ENCODE measurements at regions of chr2 and their contacts with region 1.

Region 1: GRCh38 chr2:28894470-28895177 is at the start of gene WDR43:
- DNase-seq: peak; percentile 99
- ATAC-seq: peak; percentile 94
- H3K4me3 Mint-ChIP-seq: peak within 1 kb of the TSS; percentile 97
- H3K27ac Mint-ChIP-seq: peak within 1 kb of the TSS; percentile 95
- H3K4me1 Mint-ChIP-seq: peaks cover 32% of the 10 kb centered on the region
- H3K27me3 Mint-ChIP-seq: no peaks in the 10 kb centered on the region
- total RNA-seq, gene WDR43: 109 to 170 TPM

Region 2: DNA sequence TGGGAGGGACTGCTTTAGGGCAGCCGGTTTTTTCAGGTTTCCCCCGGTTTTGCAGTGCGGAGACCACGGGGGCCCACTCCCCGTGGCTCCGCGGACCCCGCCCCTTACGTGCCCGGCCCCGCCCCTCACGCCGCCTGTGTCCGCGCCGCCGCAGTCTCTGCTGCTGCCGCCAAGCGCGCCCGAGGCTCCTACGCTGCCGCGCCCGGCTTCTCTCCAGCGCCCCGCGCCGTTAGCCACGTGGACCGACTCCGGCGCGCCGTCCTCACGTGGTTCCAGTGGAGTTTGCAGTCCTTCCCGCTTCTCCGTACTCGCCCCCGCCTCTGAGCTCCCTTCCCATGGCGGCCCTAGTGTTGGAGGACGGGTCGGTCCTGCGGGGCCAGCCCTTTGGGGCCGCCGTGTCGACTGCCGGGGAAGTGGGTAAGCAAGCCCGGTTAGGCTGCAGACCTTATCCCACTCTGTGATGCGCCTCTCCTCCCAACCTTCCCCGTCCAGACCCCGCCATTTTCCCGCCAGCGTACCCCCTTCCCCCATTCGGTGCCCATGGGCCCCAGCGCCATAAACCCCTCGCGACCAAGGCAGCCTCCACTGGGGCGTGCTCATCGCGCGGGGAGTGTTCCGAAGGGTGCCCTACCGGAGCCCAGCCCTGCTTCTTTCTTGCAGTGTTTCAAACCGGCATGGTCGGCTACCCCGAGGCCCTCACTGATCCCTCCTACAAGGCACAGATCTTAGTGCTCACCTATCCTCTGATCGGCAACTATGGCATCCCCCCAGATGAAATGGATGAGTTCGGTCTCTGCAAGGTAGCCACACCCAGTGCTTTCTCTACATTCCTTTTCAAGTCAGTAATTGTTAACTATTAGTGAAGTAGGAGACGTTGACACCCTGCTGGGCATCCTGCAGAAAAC is 1677.2 kb before region 1 on chr2 and contains the start of gene CAD:
- CTCF ChIA-PET with region 1: no interaction called
- POLR2A ChIA-PET with region 1: no interaction called
- intact Hi-C with region 1: loop called in 1 of 2 experiments (anchors 10 kb)
- DNase-seq: peak; percentile 94
- ATAC-seq: peak; percentile 90
- H3K4me3 Mint-ChIP-seq: peak within 1 kb of the TSS; percentile 93
- H3K27ac Mint-ChIP-seq: peak within 1 kb of the TSS; percentile 87
- H3K4me1 Mint-ChIP-seq: peaks cover 37% of the 10 kb centered on the region
- H3K27me3 Mint-ChIP-seq: no peaks in the 10 kb centered on the region
- total RNA-seq, gene CAD: 107 to 147 TPM

Region 3: DNA sequence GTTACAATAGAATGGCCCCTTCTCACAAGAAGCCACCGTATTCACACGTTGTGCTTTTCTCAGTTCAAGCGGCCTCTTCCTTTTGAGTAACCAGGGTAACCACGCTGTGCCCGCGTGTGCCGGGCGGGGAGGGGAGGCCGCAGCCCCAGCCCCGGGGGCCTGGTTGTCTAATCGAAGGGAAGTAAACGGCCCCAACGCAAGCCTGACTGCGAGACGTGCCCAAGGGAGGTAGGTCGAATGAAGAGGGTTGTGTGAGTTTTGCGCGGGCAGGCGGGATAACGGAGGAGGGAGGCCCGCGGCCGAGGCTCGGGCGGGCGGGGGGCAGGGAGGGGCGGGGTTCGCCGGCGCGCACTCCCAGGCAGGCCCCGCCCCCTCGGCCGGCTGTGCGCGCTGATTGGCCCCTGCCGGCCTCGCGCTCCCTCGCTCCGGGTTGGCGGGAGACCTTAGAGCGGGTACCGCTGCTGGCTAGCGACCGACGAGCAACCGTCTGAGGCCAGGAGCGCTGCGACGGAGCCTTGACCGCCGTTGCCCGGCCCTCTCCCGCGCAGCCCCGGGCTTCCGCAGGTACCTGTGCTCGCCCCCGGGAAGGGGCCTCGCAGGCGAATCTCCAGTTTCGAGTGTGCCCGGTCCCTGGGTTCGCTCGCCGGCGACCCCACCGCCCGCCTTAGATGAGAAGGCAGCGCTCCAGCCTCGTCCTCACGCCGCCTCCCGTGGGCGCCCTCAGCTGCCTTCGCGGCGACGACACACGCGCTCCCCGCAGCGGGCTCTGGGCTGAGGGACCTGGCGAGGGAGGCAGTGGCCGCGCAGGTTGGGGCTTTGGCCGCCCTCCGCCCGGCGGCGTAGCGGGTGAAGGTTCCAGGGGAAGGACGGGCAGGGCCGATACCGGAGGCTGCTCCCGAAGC is 84.0 kb before region 1 on chr2 and contains the start of gene SPDYA:
- CTCF ChIA-PET with region 1: interaction called, 3 read pairs
- POLR2A ChIA-PET with region 1: no interaction called
- intact Hi-C with region 1: loop called in 1 of 2 experiments (anchors 1 kb)
- DNase-seq: peak; percentile 90
- ATAC-seq: peak; percentile 95
- H3K4me3 Mint-ChIP-seq: peak within 1 kb of the TSS; percentile 59
- H3K27ac Mint-ChIP-seq: no peak within 1 kb of the TSS
- H3K4me1 Mint-ChIP-seq: peaks cover 14% of the 10 kb centered on the region
- H3K27me3 Mint-ChIP-seq: no peaks in the 10 kb centered on the region
- total RNA-seq, gene SPDYA: 0.93 to 1.2 TPM

Region 4: GRCh38 chr2:28870146-28870891 is 24.3 kb before region 1 on chr2 and contains the start of gene TRMT61B:
- CTCF ChIA-PET with region 1: interaction called, 4 read pairs
- POLR2A ChIA-PET with region 1: interaction called, 12 read pairs
- intact Hi-C with region 1: loop called (anchors 1 kb)
- DNase-seq: peak; percentile 98
- ATAC-seq: peak; percentile 99
- H3K4me3 Mint-ChIP-seq: peak within 1 kb of the TSS; percentile 94
- H3K27ac Mint-ChIP-seq: peak within 1 kb of the TSS; percentile 97
- H3K4me1 Mint-ChIP-seq: peaks cover 25% of the 10 kb centered on the region
- H3K27me3 Mint-ChIP-seq: no peaks in the 10 kb centered on the region
- total RNA-seq, gene TRMT61B: 22.0 to 22.2 TPM

Region 5: DNA sequence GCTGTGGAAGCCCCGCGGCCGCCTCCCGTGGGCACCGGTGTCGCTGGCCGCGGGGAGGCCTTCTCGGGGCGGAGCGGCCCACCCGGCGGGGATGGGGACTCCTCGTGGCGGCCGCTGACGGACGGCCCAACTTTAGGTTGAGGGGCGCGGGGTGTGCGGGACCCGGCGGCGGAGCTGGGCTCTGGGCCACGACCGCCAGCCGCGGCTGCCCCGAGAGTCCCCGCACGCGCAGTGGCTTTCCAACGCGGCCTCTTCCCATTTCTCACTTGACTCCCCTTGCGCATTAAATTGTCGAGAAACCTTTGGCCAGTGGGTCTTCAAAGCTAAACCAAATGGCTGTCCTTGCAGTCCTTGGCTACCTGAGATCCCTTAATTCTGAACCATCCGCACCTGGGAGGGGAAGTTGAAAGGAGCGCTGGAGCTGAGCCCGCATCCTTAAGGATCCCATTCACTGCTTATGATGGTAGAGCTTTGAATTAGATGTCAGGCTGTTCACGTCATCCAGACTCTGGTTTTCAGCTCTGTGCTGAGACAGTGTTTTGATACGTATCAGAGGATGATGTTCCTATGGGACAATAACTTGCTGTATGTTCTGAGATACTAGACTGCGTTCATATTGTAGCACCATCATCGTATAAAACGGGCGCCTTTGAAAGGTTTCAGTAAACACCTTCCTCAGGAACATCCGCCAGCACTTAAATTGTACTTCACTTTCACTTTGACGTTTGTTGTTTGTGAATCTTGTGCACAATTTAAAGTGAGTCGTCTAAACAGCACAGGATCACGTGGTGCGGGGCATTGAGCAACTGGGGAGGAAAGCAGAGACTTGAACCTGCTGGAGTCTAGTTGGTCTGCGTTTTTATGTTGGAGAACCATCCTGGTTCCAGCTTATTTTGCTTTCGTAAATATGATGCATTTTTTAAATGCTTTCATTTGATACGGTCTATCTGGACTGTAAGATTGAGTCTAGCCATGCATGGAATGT is 221.5 kb after region 1 on chr2:
- CTCF ChIA-PET with region 1: no interaction called
- POLR2A ChIA-PET with region 1: no interaction called
- intact Hi-C with region 1: loop called in 1 of 2 experiments (anchors 2 kb)
- DNase-seq: peak; percentile 88
- ATAC-seq: peak; percentile 74
- H3K4me3 Mint-ChIP-seq: peak overlapping the region; percentile 90
- H3K27ac Mint-ChIP-seq: peak overlapping the region; percentile 96
- H3K4me1 Mint-ChIP-seq: peaks cover 43% of the 10 kb centered on the region
- H3K27me3 Mint-ChIP-seq: peaks cover 5% of the 10 kb centered on the region